ENCODE measurements at regions of chr13 and their contacts with region 1.

Region 1: DNA sequence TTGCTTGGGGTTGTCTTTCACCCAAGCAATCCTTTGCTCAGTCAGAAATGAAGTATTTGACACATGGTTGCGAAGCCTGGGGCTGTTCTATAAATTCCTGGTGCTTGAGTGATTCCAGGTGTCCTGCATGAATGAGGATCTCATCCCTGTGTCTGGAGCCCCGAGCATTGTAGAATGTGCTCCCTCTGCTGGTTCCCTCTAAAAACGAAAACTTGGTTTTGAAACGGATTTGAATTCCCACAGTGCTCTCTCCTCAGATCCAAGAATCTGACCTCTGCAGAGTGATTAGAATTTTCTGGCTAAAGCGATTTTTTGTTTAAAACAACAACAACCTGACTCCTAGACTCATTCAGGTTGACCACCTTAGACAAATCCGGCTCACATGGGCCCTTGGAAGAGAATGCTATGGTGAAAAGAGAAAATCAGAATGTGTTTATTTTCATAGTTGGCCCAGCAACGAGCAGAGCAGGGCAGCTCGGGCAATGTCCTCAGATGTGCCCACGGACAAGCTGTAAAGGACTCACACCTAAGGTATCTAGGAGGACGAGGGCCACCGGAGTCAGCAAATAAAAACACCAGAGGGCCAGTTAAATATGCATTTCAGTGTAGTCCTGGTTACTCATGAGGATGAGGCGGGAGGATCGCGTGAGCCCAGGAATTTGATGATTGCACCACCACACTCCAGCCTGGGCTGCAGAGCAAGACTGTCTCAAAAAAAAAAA is 8.7 kb upstream of the ATP12A start:
- DNase-seq: peak; percentile 47
- H3K4me3 Mint-ChIP-seq: no peak overlapping the region
- H3K27ac Mint-ChIP-seq: no peak overlapping the region
- H3K4me1 Mint-ChIP-seq: peaks cover 20% of the 10 kb centered on the region
- H3K27me3 Mint-ChIP-seq: no peaks in the 10 kb centered on the region
- CTCF ChIP-seq: no peak

Region 2: DNA sequence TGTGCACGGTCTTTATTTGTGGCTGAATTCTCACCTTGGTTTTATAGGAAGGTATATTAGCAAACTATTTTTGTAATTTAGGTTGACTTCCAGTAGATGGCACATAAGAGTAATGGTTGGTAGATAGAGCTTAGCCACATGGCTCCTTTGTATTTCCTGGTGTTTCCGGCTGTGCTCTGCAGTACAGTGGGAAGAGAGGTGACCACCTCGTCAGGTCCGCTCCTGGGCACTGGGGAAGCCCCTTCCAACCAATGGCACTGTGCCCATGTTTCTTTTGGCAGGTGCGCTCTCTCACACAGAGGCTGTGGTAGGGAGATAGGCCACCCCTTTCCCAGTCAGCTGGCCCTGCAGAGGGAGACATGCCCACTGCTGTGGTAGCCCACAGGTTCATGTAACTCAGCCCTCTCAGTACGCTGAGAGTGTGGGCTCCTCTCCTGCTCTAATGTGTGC is 65.6 kb before region 1 on chr13:
- CTCF ChIA-PET with region 1: interaction called, 7 read pairs
- intact Hi-C with region 1: loop called (anchors 1 kb)
- DNase-seq: peak; percentile 48
- H3K4me3 Mint-ChIP-seq: no peak overlapping the region
- H3K27ac Mint-ChIP-seq: no peak overlapping the region
- H3K4me1 Mint-ChIP-seq: no peaks in the 10 kb centered on the region
- H3K27me3 Mint-ChIP-seq: peaks cover 23% of the 10 kb centered on the region
- CTCF ChIP-seq: peak; percentile 15

Measured in Calu3 (cell line).